ENCODE measurements at regions of chr1 and their contacts with region 1.

Region 1: GRCh38 chr1:206803221-206803730 is 31.0 kb upstream of the IL10 start:
- DNase-seq: peak; percentile 81
- H3K4me3 Mint-ChIP-seq: peak overlapping the region; percentile 20
- H3K27ac Mint-ChIP-seq: peak overlapping the region; percentile 83
- H3K4me1 Mint-ChIP-seq: peaks cover 87% of the 10 kb centered on the region
- H3K27me3 Mint-ChIP-seq: peaks cover 30% of the 10 kb centered on the region

Region 2: GRCh38 chr1:206556750-206557635 is 246.3 kb before region 1 on chr1:
- intact Hi-C with region 1: loop called (anchors 5 kb)
- DNase-seq: peak; percentile 86
- H3K4me3 Mint-ChIP-seq: peak overlapping the region; percentile 98
- H3K27ac Mint-ChIP-seq: peak overlapping the region; percentile 98
- H3K4me1 Mint-ChIP-seq: peaks cover 73% of the 10 kb centered on the region
- H3K27me3 Mint-ChIP-seq: no peaks in the 10 kb centered on the region

Region 3: GRCh38 chr1:206734499-206735142 is 68.7 kb before region 1 on chr1:
- intact Hi-C with region 1: loop called (anchors 1 kb)
- DNase-seq: peak; percentile 56
- H3K4me3 Mint-ChIP-seq: no peak overlapping the region
- H3K27ac Mint-ChIP-seq: no peak overlapping the region
- H3K4me1 Mint-ChIP-seq: peaks cover 61% of the 10 kb centered on the region
- H3K27me3 Mint-ChIP-seq: no peaks in the 10 kb centered on the region

Region 4: DNA sequence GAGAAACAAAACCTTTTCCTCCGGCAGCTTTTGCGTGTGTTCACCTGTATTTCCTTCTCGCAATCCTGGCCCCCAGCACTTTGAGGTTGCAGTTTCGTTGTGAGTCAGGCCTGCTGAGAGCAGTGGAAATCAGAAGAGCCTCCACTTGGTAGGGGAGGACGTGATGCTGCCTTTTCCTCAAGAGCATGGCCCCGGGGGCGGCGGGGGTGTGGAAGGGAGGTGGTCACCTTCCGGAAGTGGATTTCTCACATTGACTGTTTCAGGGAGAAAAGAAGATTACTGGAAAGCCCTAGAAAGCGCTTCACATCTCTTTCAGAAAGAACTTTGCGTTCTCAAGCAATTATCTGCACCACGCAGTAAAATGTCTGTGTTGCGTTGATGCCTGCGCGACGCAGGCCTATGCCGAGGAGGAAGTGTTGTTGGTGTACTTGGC is 18.8 kb before region 1 on chr1:
- intact Hi-C with region 1: loop called (anchors 1 kb)
- DNase-seq: peak; percentile 87
- H3K4me3 Mint-ChIP-seq: peak overlapping the region; percentile 72
- H3K27ac Mint-ChIP-seq: peak overlapping the region; percentile 93
- H3K4me1 Mint-ChIP-seq: peaks cover 69% of the 10 kb centered on the region
- H3K27me3 Mint-ChIP-seq: peaks cover 14% of the 10 kb centered on the region

Region 5: DNA sequence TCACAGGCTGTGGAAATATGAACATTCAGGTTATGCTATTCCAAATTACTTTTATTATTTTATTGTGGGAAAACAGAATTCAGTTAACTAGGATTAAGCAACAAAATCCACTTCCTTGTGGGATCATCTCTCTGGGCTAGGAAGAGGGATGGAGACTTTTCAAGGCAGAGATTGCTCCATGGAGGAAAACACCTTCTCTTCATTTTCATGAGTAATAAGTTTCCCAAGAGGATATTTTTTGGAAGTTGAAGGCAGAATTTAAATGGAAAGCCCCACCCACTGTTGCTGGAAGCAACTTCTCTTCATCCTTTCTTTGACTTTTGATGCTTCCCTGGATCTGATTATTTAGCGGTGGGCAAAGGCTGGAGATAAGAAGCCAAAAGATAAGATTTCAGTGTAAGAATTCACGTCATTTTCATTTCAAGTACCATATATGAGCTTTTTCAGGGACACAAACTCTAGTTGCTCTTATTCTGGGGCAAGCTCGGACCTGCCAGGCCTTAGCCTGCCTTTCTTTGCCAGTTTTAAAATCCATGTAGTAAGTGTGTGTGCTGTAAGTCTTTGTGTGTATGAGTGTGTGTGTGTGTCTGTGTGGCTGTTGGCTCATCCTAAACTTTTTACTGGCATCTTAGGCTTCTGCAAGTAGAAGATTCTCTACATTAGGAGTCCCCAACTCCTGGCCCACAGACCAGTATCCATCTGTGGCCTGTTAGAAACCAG is 82.2 kb after region 1 on chr1:
- intact Hi-C with region 1: no loop called
- DNase-seq: no peak
- H3K4me3 Mint-ChIP-seq: no peak overlapping the region
- H3K27ac Mint-ChIP-seq: no peak overlapping the region
- H3K4me1 Mint-ChIP-seq: peaks cover 24% of the 10 kb centered on the region
- H3K27me3 Mint-ChIP-seq: peaks cover 17% of the 10 kb centered on the region

Region 6: GRCh38 chr1:206897175-206897574 is 93.9 kb after region 1 on chr1 and contains the start of gene IL24:
- intact Hi-C with region 1: loop called (anchors 1 kb)
- DNase-seq: no peak
- H3K4me3 Mint-ChIP-seq: peak within 1 kb of the TSS; percentile 73
- H3K27ac Mint-ChIP-seq: peak within 1 kb of the TSS; percentile 84
- H3K4me1 Mint-ChIP-seq: peaks cover 61% of the 10 kb centered on the region
- H3K27me3 Mint-ChIP-seq: no peaks in the 10 kb centered on the region
- total RNA-seq, gene IL24: 4.4 and 6.8 TPM in 2 replicates

Region 7: DNA sequence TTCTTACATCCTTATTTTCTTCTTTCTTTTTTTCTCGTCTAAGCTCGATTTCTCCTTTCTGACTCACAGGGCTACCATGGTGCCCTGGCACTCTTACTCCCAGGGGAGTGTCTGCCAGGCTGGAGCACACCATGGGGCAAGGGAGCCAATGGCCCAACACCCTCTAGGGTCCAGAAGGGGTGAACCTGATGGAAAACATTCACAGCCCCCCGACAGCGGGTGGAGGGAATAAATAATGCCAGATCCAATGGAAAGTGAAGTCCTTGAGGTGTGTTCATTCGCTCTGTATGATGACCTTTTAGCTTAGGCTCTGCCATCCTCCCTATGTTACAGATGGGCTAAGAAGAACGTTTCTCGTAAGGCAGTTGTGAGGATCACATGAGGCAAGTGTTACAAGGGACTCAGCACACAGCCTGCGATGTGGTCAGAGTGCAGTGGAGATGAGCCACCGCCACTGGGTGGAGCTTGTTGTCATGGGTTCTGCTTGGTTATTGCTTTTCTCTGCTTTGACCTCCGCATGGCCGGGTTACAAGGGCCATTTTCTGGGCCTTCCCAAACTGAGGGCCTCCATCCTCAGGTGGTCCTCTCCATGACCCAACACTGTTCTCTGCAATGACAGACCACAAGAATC is 121.9 kb after region 1 on chr1:
- intact Hi-C with region 1: no loop called
- DNase-seq: peak; percentile 36
- H3K4me3 Mint-ChIP-seq: no peak overlapping the region
- H3K27ac Mint-ChIP-seq: no peak overlapping the region
- H3K4me1 Mint-ChIP-seq: peaks cover 13% of the 10 kb centered on the region
- H3K27me3 Mint-ChIP-seq: no peaks in the 10 kb centered on the region

Region 8: GRCh38 chr1:206941858-206942387 is 138.6 kb after region 1 on chr1:
- intact Hi-C with region 1: no loop called
- DNase-seq: no peak
- H3K4me3 Mint-ChIP-seq: no peak overlapping the region
- H3K27ac Mint-ChIP-seq: no peak overlapping the region
- H3K4me1 Mint-ChIP-seq: no peaks in the 10 kb centered on the region
- H3K27me3 Mint-ChIP-seq: peaks cover 15% of the 10 kb centered on the region